HEK293 (cell line): ENCODE measurements at regions of chr3 and their contacts with region 1.

Region 1: DNA sequence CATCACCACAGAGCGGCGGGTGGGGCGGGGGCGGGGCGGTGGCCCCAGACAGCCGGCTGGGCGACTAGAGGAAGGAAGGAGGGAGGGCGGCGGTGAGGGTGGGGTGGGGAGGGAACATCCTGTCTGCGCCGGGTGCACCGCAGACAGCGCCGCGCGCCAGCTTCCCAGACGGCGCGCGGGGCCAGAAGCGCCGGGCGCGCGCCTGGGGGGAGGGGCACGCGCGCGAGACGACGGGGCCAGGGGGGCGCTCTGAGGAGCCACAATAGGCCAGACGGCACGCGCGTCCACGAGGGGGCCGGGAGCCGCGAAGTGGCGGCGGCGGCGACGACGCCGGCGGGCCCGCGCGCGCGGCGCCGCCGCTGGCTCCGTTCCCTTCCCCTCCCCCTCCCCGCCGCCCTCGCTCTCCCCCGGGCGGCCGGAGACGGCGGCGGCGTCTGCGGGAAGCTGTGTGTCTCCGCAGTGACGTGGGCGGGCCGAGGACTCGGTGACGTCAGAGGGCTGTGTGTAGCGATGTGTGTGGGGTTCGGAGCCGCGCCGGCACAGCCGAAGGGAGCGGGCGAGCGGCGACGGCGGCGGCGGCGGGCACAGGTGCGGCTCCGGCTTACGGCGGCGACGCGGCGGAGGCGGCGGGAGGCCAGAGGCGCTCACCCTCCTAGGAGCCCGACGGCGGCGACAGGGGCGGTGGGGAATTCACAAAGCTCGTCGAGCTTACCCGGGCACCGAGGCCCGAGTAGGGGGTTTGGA is at the start of gene SKIL:
- H3K4me3 ChIP-seq: peak within 1 kb of the TSS; percentile 78
- H3K27ac ChIP-seq: peak within 1 kb of the TSS; percentile 96
- H3K4me1 ChIP-seq: no peaks in the 10 kb centered on the region
- CTCF ChIP-seq: no peak

Region 2: DNA sequence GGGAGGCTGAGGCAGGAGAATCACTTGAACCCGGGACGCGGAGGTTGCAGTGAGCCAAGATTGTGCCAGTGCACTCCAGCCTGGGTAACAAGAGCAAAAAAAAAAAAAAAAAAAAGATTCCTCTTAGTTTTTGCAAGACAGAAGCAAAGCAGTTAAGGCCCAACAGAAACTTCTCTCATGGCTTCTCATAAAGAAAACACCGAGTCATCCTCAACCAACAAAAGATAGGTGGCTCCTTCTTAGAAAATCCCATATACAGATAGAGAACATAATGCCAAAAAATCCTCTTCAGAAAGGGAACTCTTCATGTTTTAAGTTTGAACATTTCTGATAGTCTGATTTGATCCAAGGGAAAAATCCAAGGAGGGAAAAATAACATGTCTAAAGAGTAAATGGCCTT is 12.4 kb before region 1 on chr3:
- CTCF ChIA-PET with region 1: interaction called, 4 read pairs
- POLR2A ChIA-PET with region 1: interaction called, 16 read pairs
- H3K4me3 ChIP-seq: no peak overlapping the region
- H3K27ac ChIP-seq: no peak overlapping the region
- H3K4me1 ChIP-seq: no peaks in the 10 kb centered on the region
- CTCF ChIP-seq: no peak